ENCODE measurements at regions of chr10 and their contacts with region 1.

Region 1: DNA sequence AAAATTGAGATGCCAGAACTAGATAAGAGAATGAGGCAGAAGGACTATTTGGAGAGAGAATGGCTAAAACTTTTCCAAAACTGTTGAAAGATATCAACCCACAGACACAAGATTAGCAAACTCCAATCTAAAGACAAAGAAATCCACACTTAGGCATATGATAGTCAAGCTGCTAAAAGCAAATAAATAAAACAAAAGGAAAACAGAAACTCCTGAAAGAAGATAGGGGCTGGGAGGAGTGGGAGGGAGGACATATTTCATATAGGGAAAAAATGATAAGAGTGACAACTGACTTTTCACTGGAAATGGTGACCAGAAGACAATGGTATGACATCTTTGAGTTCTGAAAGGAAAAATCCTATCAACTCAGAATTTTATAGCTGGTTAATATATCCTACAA is 105.4 kb upstream of the ADO start:
- DNase-seq: no peak
- H3K4me3 Mint-ChIP-seq: no peak overlapping the region
- H3K27ac Mint-ChIP-seq: no peak overlapping the region
- H3K4me1 Mint-ChIP-seq: peaks cover 6% of the 10 kb centered on the region
- H3K27me3 Mint-ChIP-seq: peaks cover 9% of the 10 kb centered on the region

Region 2: DNA sequence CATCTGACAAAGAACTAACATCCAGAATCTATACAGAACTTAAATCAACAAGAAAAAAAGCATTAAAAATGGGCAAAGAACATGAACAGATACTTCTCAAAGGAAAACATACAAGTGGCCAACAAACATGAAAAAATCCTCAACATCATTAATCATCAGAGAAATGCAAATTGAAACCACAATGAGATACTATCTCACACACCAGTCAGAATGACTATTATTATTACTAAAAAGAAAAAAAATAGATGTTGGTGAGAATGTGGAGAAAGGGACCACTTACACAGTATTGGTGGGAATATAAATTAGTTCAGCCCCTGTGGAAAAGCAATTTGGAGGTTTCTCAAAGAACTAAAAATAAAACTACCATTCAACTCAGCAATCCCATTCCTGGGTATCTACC is 16.2 kb after region 1 on chr10:
- intact Hi-C with region 1: loop called (anchors 2 kb)
- DNase-seq: no peak
- H3K4me3 Mint-ChIP-seq: no peak overlapping the region
- H3K27ac Mint-ChIP-seq: no peak overlapping the region
- H3K4me1 Mint-ChIP-seq: peaks cover 12% of the 10 kb centered on the region
- H3K27me3 Mint-ChIP-seq: peaks cover 5% of the 10 kb centered on the region

Measured in activated T-helper 1 cell treated with anti-CD3 and anti-CD28 coated beads, Interleukin-12 subunit alpha, Interleukin-12 subunit beta, Interleukin-2, Interleukin-4 antibody, amounts not matched to agents 30 ng/mL and 10 ng/mL and 1 ng/mL, durations not matched to agents 14 hours and 24 hours and 36 hours (primary cell).